Heart left ventricle (tissue), 16 donors: ENCODE measurements at regions of chr2 and their contacts with region 1.

Region 1: DNA sequence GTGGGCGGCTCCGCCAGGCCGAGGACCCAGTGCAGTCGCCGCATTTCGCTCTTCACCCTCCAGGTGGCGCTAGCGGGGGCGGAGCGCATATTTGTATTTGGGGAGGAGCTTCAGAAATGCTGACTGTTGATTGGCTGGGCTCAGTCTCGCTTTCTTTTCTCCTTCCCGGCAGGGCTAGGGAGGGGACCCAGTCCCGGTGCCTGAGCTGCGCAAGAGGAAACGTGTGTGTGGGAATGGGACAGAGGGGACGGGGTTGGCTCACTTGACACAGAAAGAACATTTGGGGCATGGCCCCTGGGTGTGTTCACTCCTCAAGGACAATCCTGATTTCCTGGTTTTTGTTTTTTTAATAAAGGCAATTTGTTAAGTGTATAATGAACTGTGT is 20.3 kb upstream of the DNMT3A start:
- DNase-seq: peak; percentile 91 to 95 (median 92)
- ATAC-seq: peak; percentile 98 to 100 (median 99)
- H3K4me3 ChIP-seq: peak overlapping the region in 10 of 12 donors; percentile 12 to 57 (median 44)
- H3K27ac ChIP-seq: peak overlapping the region; percentile 7 to 90 (median 70)
- H3K4me1 ChIP-seq: peaks cover 0 to 20% (median 5%) of the 10 kb centered on the region in 12 donors
- H3K27me3 ChIP-seq: no peaks in the 10 kb centered on the region
- CTCF ChIP-seq: peak; percentile 96 to 100 (median 98)
- POLR2A ChIP-seq: peak in 1 of 2 donors; percentile 74

Region 2: DNA sequence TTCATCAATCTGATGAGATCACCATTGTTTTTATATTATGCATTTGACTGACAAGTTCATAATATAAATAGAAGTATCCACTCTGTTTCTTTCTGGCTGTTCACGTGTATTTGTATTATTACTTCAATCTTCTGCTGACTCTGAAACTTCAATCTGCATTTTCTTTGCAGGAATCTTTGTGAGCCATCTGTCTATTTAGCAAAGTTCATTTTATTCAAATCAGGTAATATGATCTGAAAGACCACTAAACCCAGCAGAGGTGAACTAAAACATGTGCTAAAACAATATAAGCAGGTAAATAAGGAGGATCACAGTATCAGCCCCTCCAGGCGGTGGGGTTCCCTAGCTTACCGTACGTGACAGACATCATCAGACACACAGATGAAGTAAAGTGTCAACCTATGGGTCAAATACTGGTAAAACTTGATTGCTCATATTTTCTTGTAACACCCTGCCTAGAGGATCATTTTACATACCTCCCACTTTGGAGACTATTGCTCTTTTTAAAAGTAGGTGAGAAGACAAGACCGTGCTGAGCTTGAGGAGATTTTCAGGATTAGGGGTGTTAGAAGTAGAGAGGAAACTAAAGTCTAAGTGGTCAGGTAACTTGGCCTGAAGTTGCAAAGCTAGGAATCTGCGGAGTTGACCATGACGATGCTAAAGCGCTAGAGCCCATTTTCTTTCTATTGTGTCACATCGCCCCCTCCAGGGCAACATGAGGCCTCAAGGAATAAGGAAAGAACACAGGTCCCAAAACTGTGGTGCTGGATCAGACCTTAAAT is 302.3 kb after region 1 on chr2:
- intact Hi-C with region 1: loop called in 1 of 10 experiments (anchors 5 kb)
- DNase-seq: peak in 4 of 5 donors; percentile 42 to 53 (median 50)
- ATAC-seq: peak; percentile 42 to 86 (median 79)
- H3K4me3 ChIP-seq: peak overlapping the region in 1 of 12 donors; percentile 10
- H3K27ac ChIP-seq: no peak overlapping the region
- H3K4me1 ChIP-seq: peaks cover 0 to 9% (median 0%) of the 10 kb centered on the region in 12 donors
- H3K27me3 ChIP-seq: no peaks in the 10 kb centered on the region
- CTCF ChIP-seq: peak; percentile 39 to 84 (median 69)
- POLR2A ChIP-seq: no peak

Region 3: GRCh38 chr2:25673300-25674076 is 311.4 kb after region 1 on chr2 and contains the start of gene DTNB:
- intact Hi-C with region 1: loop called in 1 of 10 experiments (anchors 10 kb)
- DNase-seq: peak; percentile 81 to 91 (median 86)
- ATAC-seq: peak; percentile 37 to 92 (median 88)
- H3K4me3 ChIP-seq: peak within 1 kb of the TSS; percentile 65 to 99 (median 90)
- H3K27ac ChIP-seq: peak within 1 kb of the TSS; percentile 54 to 92 (median 83)
- H3K4me1 ChIP-seq: peaks cover 0 to 21% (median 11%) of the 10 kb centered on the region in 12 donors
- H3K27me3 ChIP-seq: no peaks in the 10 kb centered on the region
- CTCF ChIP-seq: no peak
- POLR2A ChIP-seq: peak in 1 of 2 donors; percentile 42
- total RNA-seq, gene DTNB: 2.5 to 17.3 (median 6.3) TPM